Natural killer cell (primary cell): ENCODE measurements at regions of chr15 and their contacts with region 1.

Region 1: DNA sequence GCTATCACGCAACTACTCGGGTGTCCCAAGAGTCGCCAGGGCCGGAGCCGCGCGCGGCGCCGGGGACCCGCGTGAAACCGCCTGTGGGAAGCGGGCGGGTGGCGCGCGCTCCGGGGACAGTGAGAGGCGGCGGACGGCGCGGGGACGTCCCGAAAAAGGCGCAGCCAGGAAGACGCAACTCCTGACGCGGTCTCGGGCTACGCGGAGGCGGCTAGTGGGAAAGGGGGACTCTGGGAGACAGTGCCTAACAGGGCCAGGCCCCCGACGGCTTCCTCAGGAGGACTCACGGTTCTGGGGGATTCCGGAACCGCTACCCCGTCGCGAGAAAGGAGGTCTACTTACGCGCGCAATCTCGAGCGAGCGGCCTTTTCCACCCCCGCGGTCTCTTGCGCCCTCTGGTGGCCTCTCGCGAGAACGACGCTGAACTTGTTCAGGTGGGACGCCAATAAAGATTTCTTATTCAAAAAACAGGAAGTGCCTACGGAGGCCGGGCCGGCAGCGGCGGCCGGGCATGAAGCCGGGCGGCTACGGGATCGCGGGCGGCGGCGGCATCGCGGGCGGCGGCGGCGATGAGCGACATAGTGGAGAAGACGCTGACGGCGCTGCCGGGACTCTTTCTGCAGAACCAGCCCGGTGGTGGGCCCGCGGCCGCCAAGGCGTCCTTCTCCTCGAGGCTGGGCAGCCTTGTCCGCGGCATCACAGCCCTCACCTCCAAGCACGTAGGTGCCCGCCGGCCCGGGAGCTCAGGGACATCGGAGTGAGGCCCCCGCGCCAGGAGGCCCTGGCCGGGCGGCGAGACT is at the start of gene AP4E1:
- DNase-seq: peak; percentile 95 to 97
- ATAC-seq: peak; percentile 64 to 89 (median 71)
- H3K4me3 ChIP-seq: peak within 1 kb of the TSS; percentile 94
- H3K4me3 Mint-ChIP-seq: peak within 1 kb of the TSS; percentile 95
- H3K27ac ChIP-seq: peak within 1 kb of the TSS; percentile 91
- H3K27ac Mint-ChIP-seq: peak within 1 kb of the TSS; percentile 97 to 100
- H3K4me1 ChIP-seq: peaks cover 20% of the 10 kb centered on the region
- H3K4me1 Mint-ChIP-seq: peaks cover 26 to 28% of the 10 kb centered on the region in 2 donors
- H3K27me3 ChIP-seq: no peaks in the 10 kb centered on the region
- H3K27me3 Mint-ChIP-seq: no peaks in the 10 kb centered on the region
- CTCF ChIP-seq: peak; percentile 88
- total RNA-seq, gene AP4E1: 13.1 to 14.5 (median 14.1) TPM

Region 2: DNA sequence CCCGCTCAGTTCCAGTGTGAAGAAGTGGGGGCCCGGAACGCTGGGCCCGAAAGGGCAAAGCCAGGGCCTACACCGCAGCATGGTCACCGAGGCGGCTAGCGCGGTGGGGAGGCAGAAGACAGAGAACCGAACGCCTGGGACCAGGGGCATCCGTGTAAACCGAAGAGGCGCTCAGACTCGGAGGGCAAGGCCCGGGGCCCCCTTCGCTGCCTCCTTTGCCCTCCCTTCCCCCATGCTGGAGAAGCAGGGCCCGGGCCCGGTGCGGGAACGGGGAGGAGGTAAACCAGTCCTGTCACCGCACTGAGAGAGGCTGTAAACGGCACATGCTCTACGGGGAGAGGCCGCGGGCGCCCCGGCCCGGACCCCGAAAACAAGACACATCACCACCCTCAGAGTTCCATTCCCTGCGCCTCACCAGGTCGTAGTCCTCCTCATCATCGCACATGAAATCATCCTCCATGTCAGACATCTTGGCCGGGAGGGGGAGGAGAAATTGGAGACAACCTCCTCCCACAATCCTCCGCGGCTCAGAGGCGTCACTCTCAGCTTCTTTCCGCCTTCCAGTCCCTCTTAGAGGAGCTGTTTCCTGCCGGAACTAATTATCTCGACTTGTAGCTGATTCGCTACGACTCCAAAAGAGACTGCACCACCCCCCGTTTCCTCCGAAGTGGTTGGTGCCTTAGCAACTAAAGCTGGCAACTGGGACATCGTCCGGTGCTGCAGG is 1753.1 kb before region 1 on chr15 and contains the start of gene COPS2:
- intact Hi-C with region 1: loop called (anchors 10 kb)
- DNase-seq: peak; percentile 87 to 97
- ATAC-seq: peak; percentile 92 to 99 (median 95)
- H3K4me3 ChIP-seq: peak within 1 kb of the TSS; percentile 87
- H3K4me3 Mint-ChIP-seq: peak within 1 kb of the TSS; percentile 99
- H3K27ac ChIP-seq: peak within 1 kb of the TSS; percentile 90
- H3K27ac Mint-ChIP-seq: peak within 1 kb of the TSS; percentile 95 to 99
- H3K4me1 ChIP-seq: peaks cover 7% of the 10 kb centered on the region
- H3K4me1 Mint-ChIP-seq: peaks cover 27 to 32% of the 10 kb centered on the region in 2 donors
- H3K27me3 ChIP-seq: no peaks in the 10 kb centered on the region
- H3K27me3 Mint-ChIP-seq: no peaks in the 10 kb centered on the region
- CTCF ChIP-seq: no peak
- total RNA-seq, gene COPS2: 77.6 to 90.7 (median 89.3) TPM

Region 3: GRCh38 chr15:50066192-50066591 is 842.2 kb before region 1 on chr15:
- intact Hi-C with region 1: loop called (anchors 2 kb)
- DNase-seq: peak; percentile 45 to 48
- ATAC-seq: peak; percentile 84 to 94 (median 90)
- H3K4me3 ChIP-seq: no peak overlapping the region
- H3K4me3 Mint-ChIP-seq: peak overlapping the region; percentile 38
- H3K27ac ChIP-seq: peak overlapping the region; percentile 24
- H3K27ac Mint-ChIP-seq: peak overlapping the region; percentile 75 to 92
- H3K4me1 ChIP-seq: peaks cover 3% of the 10 kb centered on the region
- H3K4me1 Mint-ChIP-seq: peaks cover 64 to 76% of the 10 kb centered on the region in 2 donors
- H3K27me3 ChIP-seq: no peaks in the 10 kb centered on the region
- H3K27me3 Mint-ChIP-seq: no peaks in the 10 kb centered on the region
- CTCF ChIP-seq: no peak

Region 4: DNA sequence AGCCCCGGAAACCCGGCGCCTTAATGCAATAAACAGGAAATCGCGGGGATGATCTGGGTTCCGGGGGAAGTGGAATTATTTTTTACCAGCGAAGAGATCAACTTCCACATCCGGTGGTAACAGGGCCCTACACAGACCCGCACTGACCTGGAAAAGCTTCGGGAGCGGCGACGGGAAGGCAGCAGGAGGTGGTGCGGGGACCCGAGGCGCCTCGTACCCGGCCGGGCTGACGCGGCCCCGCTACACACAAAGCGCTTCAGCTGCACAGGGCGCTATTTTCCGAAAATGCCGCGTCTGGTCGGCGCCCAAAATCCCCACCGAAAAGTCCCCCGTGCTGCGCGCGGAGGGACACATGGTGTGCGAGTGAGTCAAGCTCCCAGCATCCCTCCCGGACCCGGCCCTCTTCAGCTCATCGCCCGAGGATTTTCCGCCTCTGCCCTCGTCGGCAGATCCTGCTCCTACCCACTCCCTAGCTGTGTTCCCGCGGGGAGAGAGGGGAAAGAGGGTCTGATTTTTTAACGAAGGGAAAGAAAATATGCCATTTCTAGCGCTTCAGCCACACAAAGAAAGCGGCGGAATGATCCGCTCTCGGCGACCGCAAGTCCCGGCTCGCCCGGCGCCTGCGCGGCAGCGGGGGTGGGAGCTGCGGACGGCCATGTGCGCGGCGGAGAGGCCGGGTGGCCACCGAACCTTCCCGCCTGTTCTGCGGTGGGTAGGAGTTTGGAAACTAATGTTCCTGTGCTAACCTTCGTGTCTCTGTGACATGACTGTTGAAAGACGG is 553.4 kb before region 1 on chr15 and contains the start of gene GABPB1:
- intact Hi-C with region 1: loop called (anchors 1 kb)
- DNase-seq: peak; percentile 87 to 95
- ATAC-seq: peak; percentile 53 to 67 (median 63)
- H3K4me3 ChIP-seq: peak within 1 kb of the TSS; percentile 99
- H3K4me3 Mint-ChIP-seq: peak within 1 kb of the TSS; percentile 99
- H3K27ac ChIP-seq: peak within 1 kb of the TSS; percentile 100
- H3K27ac Mint-ChIP-seq: peak within 1 kb of the TSS; percentile 97 to 100
- H3K4me1 ChIP-seq: peaks cover 25% of the 10 kb centered on the region
- H3K4me1 Mint-ChIP-seq: peaks cover 62 to 64% of the 10 kb centered on the region in 2 donors
- H3K27me3 ChIP-seq: no peaks in the 10 kb centered on the region
- H3K27me3 Mint-ChIP-seq: no peaks in the 10 kb centered on the region
- CTCF ChIP-seq: no peak
- total RNA-seq, gene GABPB1: 20.8 to 30.8 (median 26.3) TPM

Region 5: DNA sequence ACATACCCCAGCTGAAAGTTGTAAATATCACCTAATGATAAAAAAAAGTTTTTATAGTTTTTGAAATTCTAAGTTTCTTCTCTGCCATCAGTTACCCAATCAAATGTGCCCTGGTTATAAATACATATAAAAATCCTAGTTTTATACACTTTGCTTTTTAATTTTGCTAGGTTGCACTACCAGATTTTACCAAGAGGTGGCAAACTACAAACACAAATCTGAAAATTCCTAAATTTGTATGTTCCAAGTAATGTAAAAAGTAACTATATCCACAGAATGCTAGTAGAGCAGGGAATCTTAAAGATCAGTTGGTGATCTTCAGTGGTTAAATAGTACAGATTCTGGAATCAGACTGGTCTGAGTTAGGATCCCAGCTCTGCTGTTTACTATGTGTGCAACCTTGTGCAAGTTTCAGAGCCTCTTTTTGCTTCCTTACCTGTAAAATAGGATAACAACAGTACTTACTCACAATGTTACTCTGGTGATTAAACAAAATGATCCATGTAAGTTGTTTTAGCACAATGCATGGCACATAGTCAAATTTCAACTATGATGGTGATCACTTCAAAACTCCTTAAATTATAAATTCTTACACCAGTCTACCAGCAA is 232.8 kb before region 1 on chr15:
- intact Hi-C with region 1: loop called (anchors 1 kb)
- DNase-seq: peak in 1 of 2 donors; percentile 64
- ATAC-seq: peak in 2 of 3 donors; percentile 26 to 52
- H3K4me3 ChIP-seq: no peak overlapping the region
- H3K4me3 Mint-ChIP-seq: no peak overlapping the region
- H3K27ac ChIP-seq: peak overlapping the region; percentile 25
- H3K27ac Mint-ChIP-seq: peak overlapping the region; percentile 4 to 71
- H3K4me1 ChIP-seq: no peaks in the 10 kb centered on the region
- H3K4me1 Mint-ChIP-seq: peaks cover 17 to 19% of the 10 kb centered on the region in 2 donors
- H3K27me3 ChIP-seq: no peaks in the 10 kb centered on the region
- H3K27me3 Mint-ChIP-seq: no peaks in the 10 kb centered on the region
- CTCF ChIP-seq: peak; percentile 85

Region 6: DNA sequence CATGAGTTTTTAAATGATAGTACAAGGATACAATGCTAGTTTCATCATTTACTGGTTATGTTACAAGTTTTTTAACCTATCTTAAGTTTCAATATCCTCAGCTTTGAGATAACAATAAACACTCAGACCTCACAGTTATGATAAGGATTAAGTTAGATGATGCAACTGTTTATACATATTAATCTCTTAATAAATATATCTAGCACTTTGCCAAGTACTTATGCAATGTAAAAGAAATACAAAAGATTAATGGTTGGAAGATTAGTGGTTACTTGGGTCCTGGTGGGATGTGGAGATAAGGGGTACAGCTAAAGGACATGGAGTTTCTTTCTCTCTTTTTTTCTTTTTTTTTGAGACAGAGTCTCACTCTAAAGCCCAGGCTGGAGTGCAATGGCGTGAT is 154.9 kb before region 1 on chr15:
- intact Hi-C with region 1: loop called (anchors 5 kb)
- DNase-seq: no peak
- ATAC-seq: peak in 1 of 3 donors; percentile 33
- H3K4me3 ChIP-seq: no peak overlapping the region
- H3K4me3 Mint-ChIP-seq: no peak overlapping the region
- H3K27ac ChIP-seq: no peak overlapping the region
- H3K27ac Mint-ChIP-seq: peak overlapping the region in 1 of 2 donors; percentile 8
- H3K4me1 ChIP-seq: peaks cover 9% of the 10 kb centered on the region
- H3K4me1 Mint-ChIP-seq: peaks cover 43 to 52% of the 10 kb centered on the region in 2 donors
- H3K27me3 ChIP-seq: no peaks in the 10 kb centered on the region
- H3K27me3 Mint-ChIP-seq: no peaks in the 10 kb centered on the region
- CTCF ChIP-seq: no peak

Region 7: DNA sequence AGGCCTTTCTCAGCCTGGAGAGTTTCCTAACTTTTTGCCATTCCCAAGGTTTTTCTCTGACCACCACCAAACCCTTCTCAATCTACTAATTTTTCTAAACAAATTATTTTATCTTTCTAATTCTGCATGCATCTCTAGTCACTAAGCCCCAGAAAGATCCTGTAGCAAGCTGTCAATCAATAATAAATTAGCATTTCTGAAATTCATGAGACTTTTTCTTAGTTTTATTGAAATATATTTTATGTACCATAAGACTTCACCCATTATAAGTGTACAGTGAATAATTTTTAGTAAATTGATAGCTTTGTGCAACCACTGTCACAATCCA is 22.3 kb before region 1 on chr15:
- intact Hi-C with region 1: loop called (anchors 1 kb)
- DNase-seq: no peak
- ATAC-seq: no peak
- H3K4me3 ChIP-seq: no peak overlapping the region
- H3K4me3 Mint-ChIP-seq: no peak overlapping the region
- H3K27ac ChIP-seq: no peak overlapping the region
- H3K27ac Mint-ChIP-seq: no peak overlapping the region
- H3K4me1 ChIP-seq: peaks cover 15% of the 10 kb centered on the region
- H3K4me1 Mint-ChIP-seq: peaks cover 0 to 5% of the 10 kb centered on the region in 2 donors
- H3K27me3 ChIP-seq: no peaks in the 10 kb centered on the region
- H3K27me3 Mint-ChIP-seq: no peaks in the 10 kb centered on the region
- CTCF ChIP-seq: peak; percentile 39

Region 8: DNA sequence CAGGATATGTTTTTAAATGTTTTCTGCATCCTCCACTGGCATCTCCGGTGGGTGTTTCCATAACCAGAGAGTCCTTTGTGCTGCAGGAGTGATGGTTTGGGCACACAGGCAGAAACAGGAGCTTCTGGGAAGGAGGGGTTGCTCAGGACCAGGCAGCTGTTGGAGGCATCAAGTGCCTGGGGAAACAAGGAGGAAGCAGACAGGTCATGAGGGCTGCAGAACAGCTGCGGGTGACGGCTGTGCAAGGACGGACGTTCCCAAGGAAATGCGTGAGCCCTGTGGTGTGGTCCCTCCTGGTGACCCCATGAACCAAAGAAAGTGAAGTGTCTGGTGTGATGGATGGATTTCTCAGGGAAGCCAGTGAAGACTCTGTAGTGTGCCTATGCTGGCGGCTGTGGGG is 247.5 kb after region 1 on chr15:
- intact Hi-C with region 1: no loop called
- DNase-seq: no peak
- ATAC-seq: no peak
- H3K4me3 ChIP-seq: no peak overlapping the region
- H3K4me3 Mint-ChIP-seq: no peak overlapping the region
- H3K27ac ChIP-seq: no peak overlapping the region
- H3K27ac Mint-ChIP-seq: no peak overlapping the region
- H3K4me1 ChIP-seq: no peaks in the 10 kb centered on the region
- H3K4me1 Mint-ChIP-seq: no peaks in the 10 kb centered on the region
- H3K27me3 ChIP-seq: no peaks in the 10 kb centered on the region
- H3K27me3 Mint-ChIP-seq: peaks cover 6 to 23% of the 10 kb centered on the region in 2 donors
- CTCF ChIP-seq: no peak